Activated T-helper 1 cell treated with anti-CD3 and anti-CD28 coated beads, Interleukin-12 subunit alpha, Interleukin-12 subunit beta, Interleukin-2, Interleukin-4 antibody, amounts not matched to agents 30 ng/mL and 10 ng/mL and 1 ng/mL, durations not matched to agents 14 hours and 24 hours and 36 hours (primary cell): ENCODE measurements at regions of chr17 and their contacts with region 1.

Region 1: DNA sequence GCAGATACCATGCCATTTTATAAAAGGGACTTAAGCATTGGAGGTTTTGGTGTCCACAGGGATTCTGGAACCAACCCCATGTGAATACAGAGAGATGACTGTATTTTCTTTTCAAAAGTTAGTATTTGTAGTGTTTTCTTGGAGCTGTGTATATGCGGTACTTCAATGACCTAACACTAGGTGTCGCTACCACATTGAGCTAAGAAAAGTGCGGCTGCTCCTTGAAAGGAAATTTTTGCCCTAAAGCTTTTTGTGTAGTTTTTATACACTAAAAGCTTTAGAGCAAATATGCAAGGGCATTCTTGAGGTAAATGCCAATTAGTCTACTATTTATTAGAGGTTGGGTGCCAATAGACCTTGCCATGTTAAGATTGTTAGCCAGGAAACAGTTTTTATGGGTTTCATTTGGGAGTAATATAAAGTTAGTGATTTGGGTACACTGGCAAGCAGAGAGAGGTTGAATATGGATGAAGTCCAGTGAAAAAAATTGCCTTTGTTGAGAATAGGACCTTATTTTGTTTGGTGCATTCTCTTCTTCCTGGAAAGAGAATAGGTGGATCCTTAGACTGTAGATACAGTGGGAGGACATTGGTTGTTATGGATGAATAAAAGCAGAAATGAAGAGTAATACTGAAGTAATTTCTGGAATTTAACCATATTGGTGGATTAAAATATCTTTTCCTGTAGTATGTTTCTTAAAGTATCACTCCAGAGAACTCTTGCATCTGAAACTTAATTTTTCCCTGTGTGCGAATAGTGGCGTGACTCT is 43.3 kb downstream of the BCAS3 start:
- DNase-seq: peak; percentile 21
- H3K4me3 Mint-ChIP-seq: no peak overlapping the region
- H3K27ac Mint-ChIP-seq: no peak overlapping the region
- H3K4me1 Mint-ChIP-seq: no peaks in the 10 kb centered on the region
- H3K27me3 Mint-ChIP-seq: no peaks in the 10 kb centered on the region

Region 2: DNA sequence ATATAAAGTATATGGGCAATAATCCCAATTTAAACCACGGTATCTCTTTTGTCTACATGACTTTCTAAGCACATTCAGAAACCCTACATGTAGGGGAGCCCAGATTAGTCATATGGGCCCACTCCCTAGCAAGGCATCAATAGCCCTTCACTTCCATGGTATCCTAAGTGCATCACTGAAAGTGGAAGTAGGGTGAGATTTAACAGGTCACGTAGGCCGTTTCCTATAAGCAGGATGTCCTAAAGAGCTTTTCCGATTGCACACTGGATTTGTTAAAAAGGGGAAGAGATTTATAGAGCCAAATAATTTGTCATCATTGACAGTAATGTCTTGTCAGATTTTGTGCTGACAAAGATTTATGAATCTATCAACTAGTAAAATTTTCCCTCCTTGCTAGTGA is 532.2 kb before region 1 on chr17:
- intact Hi-C with region 1: no loop called
- DNase-seq: no peak
- H3K4me3 Mint-ChIP-seq: no peak overlapping the region
- H3K27ac Mint-ChIP-seq: no peak overlapping the region
- H3K4me1 Mint-ChIP-seq: no peaks in the 10 kb centered on the region
- H3K27me3 Mint-ChIP-seq: no peaks in the 10 kb centered on the region

Region 3: DNA sequence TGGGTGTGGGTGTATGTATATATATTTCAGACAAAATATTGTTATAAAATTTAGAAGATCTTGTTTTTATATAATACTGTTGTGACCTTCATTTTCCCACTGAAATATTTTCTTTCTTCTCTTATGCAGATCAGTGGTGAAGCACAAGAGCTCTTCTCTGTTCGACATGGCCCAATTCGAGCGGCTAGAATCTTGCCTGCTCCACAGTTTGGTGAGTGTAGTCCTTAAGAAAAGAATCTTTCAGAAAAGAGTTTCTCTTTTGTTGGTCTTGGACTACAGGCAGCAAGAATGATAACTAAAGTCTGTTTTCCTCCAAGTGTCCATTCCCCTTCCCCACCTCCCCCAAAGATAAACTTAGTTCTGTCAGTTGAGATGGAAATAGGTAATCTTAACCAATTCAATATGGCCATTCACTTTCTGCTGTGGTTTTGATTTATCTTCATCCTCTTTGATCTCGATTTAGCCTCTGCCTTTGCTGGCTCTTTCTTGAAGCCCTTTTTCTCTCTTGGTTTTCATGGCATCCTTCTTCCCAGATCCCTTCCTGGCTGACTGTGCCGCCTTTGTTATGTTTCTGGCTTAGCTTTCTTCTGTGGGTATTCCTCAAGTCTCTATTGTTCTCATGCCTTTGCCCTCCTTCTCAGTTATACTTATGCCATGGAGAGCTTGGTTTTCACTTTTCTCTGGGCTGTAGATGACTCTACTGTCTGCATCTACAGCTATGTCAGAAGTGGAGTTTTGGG is 26.3 kb after region 1 on chr17:
- intact Hi-C with region 1: no loop called
- DNase-seq: no peak
- H3K4me3 Mint-ChIP-seq: no peak overlapping the region
- H3K27ac Mint-ChIP-seq: no peak overlapping the region
- H3K4me1 Mint-ChIP-seq: no peaks in the 10 kb centered on the region
- H3K27me3 Mint-ChIP-seq: peaks cover 5% of the 10 kb centered on the region

Region 4: DNA sequence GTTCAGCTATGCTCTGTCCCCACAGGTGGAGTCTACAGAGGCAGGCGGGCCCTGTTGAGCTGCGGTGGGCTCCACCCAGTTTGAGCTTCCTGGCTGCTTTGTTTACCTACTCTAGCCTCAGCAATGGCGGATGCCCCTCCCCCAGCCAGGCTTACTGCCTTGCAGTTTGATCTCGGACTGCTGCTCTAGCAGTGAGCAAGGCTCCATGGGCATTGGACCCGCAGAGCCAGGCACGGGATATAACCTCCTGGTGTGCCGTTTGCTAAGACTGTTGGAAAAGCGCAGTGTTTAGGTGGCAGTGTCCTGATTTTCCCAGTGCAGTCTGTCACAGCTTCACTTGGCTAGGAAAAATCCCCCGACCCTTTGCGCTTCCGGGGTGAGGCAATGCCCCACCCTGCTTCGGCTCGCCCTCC is 45.8 kb after region 1 on chr17:
- intact Hi-C with region 1: no loop called
- DNase-seq: no peak
- H3K4me3 Mint-ChIP-seq: no peak overlapping the region
- H3K27ac Mint-ChIP-seq: no peak overlapping the region
- H3K4me1 Mint-ChIP-seq: no peaks in the 10 kb centered on the region
- H3K27me3 Mint-ChIP-seq: no peaks in the 10 kb centered on the region

Region 5: DNA sequence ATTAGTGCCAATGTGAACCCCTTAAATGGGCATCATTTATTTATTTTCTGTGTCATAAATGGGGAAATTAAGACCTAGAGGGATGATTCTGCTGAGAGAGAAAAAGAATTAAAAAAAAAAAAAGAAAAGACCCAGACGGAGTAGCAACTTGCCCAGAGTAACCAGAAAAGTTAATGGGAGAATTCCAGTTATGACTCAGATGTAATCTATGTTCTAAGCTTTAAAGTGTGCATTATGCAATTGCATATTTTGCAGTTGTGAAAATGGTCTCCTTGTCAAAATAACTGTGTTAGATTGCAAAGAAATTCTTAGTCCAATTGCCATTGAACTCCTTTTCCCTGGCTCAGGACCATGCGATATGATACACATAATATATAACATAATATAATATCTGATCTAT is 640.1 kb after region 1 on chr17:
- intact Hi-C with region 1: loop called (anchors 2 kb)
- DNase-seq: no peak
- H3K4me3 Mint-ChIP-seq: no peak overlapping the region
- H3K27ac Mint-ChIP-seq: no peak overlapping the region
- H3K4me1 Mint-ChIP-seq: no peaks in the 10 kb centered on the region
- H3K27me3 Mint-ChIP-seq: no peaks in the 10 kb centered on the region

Region 6: DNA sequence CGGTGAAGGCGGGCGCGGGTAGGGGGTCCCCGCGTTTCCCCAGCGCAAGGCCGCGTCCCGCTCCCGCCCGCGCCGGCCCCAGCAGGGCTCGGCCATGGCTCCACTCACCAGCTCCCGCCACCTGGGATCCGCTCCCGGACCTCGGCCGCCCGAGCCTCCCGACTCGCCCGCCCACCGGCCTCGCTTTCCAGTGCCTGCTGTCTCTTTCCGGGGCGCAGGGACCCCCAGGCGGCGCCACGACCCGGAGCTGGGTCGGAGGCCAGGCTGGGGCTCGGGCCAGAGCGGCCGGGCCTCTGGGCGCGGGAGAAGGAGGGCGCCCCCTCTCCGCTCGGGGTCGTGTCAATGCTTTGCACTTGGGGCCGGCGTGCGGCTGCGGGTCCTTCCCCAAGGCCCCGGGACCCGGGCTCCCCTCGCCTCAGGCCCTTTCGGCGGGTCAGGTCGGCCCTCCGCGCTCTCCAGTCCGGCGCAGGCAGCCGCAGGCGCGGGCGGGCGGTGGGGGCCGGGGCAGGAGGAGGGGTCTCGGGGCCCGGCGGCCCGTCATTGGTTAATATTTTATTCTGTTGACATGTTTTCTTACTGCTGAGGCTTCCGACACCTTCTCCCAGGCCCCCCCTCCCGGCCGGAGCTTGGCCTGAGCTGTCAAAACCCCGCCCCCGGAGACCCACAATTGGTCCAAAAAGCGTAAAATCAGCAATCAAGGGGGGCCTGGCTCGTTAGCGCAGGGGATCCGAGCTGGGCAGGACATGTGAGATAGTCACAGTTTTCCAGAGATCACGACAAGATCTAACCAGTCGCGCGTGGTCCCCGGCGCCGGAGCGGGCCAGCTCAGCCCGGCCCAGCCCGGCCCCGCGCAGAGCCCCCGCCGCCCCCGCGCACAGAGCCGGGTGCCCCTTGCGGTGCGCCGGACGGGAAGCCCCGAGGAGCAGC is 678.4 kb after region 1 on chr17 and contains the start of gene TBX2:
- intact Hi-C with region 1: loop called (anchors 5 kb)
- DNase-seq: no peak
- H3K4me3 Mint-ChIP-seq: peak within 1 kb of the TSS; percentile 56
- H3K27ac Mint-ChIP-seq: peak within 1 kb of the TSS; percentile 78
- H3K4me1 Mint-ChIP-seq: peaks cover 29% of the 10 kb centered on the region
- H3K27me3 Mint-ChIP-seq: peaks cover 56% of the 10 kb centered on the region
- total RNA-seq, gene TBX2: not detected in 2 replicates